ENCODE measurements at regions of chr15 and their contacts with region 1.

Region 1: GRCh38 chr15:26449291-26449690 is 323.6 kb downstream of the GABRB3 start:
- DNase-seq: no peak
- ATAC-seq: no peak
- H3K4me3 ChIP-seq: no peak overlapping the region
- H3K27ac ChIP-seq: no peak overlapping the region
- H3K4me1 ChIP-seq: no peaks in the 10 kb centered on the region
- H3K27me3 ChIP-seq: no peaks in the 10 kb centered on the region

Region 2: DNA sequence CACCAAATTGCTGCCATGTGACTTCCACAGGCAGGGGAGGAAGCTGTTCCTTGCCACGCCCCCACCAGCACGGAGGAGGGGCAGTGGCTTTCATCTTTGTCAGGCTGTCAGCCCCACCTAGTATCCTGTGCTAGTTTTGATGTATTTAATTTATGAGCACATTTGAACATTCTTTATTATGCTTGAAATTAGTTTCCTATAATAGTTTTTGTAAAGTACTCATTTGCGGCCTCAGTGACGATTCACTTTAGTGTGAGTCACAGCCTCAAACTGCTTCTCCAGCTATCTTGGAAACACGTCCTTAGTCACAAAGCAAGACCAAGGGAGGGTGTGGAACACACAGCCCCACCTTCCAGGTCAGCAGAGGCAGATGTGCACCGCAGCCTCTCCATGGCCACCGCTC is 346.3 kb before region 1 on chr15:
- intact Hi-C with region 1: no loop called
- DNase-seq: peak in 1 of 3 donors; percentile 55
- ATAC-seq: no peak
- H3K4me3 ChIP-seq: no peak overlapping the region
- H3K27ac ChIP-seq: no peak overlapping the region
- H3K4me1 ChIP-seq: no peaks in the 10 kb centered on the region
- H3K27me3 ChIP-seq: no peaks in the 10 kb centered on the region

Region 3: DNA sequence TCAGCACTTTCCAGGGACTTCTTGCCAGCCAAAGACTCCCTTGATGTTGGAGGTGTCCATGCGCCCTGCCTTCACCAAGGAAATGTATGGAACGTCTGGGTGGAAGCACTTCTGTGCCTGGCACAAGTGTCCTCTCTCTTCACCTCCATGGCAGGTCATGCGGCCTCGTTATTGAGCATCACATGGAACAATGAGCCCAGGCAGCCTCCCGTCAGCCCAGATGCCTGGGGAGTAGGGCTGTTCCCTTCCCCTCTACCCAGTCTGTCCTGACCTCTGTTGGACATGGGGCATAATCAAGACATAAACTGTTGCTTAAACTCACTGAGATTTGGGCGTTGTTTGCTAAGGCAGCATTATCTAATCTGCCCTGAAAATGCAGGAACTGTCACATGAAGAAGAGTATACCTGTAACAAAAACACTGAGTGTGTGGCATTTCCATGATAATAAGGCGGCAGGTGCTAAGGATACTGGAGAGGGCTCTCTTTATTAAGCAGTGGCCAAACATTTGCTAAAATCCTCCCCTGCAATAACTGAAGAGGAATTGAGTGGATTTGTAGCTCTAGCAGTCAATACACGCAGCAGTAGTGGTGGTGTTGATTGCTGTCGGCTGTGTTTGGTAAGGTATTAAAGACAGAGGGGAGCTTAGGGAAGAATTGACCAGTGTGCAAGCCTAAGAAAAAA is 248.0 kb before region 1 on chr15:
- intact Hi-C with region 1: no loop called
- DNase-seq: no peak
- ATAC-seq: no peak
- H3K4me3 ChIP-seq: no peak overlapping the region
- H3K27ac ChIP-seq: no peak overlapping the region
- H3K4me1 ChIP-seq: no peaks in the 10 kb centered on the region
- H3K27me3 ChIP-seq: no peaks in the 10 kb centered on the region

Region 4: GRCh38 chr15:26294059-26294689 is 155.1 kb before region 1 on chr15:
- intact Hi-C with region 1: loop called in 1 of 4 experiments (anchors 10 kb)
- DNase-seq: peak; percentile 40 to 82 (median 78)
- ATAC-seq: peak; percentile 93 to 94
- H3K4me3 ChIP-seq: no peak overlapping the region
- H3K27ac ChIP-seq: no peak overlapping the region
- H3K4me1 ChIP-seq: no peaks in the 10 kb centered on the region
- H3K27me3 ChIP-seq: no peaks in the 10 kb centered on the region

Measured in right cardiac atrium (tissue), 5 donors.